ENCODE measurements at regions of chr6 and their contacts with region 1.

Region 1: GRCh38 chr6:43506667-43507471 is 3.3 kb downstream of the LRRC73 start:
- DNase-seq: peak; percentile 71 to 94
- H3K4me3 ChIP-seq: no peak overlapping the region
- CTCF ChIP-seq: peak in 1 of 3 donors; percentile 85
- POLR2A ChIP-seq: no peak

Region 2: DNA sequence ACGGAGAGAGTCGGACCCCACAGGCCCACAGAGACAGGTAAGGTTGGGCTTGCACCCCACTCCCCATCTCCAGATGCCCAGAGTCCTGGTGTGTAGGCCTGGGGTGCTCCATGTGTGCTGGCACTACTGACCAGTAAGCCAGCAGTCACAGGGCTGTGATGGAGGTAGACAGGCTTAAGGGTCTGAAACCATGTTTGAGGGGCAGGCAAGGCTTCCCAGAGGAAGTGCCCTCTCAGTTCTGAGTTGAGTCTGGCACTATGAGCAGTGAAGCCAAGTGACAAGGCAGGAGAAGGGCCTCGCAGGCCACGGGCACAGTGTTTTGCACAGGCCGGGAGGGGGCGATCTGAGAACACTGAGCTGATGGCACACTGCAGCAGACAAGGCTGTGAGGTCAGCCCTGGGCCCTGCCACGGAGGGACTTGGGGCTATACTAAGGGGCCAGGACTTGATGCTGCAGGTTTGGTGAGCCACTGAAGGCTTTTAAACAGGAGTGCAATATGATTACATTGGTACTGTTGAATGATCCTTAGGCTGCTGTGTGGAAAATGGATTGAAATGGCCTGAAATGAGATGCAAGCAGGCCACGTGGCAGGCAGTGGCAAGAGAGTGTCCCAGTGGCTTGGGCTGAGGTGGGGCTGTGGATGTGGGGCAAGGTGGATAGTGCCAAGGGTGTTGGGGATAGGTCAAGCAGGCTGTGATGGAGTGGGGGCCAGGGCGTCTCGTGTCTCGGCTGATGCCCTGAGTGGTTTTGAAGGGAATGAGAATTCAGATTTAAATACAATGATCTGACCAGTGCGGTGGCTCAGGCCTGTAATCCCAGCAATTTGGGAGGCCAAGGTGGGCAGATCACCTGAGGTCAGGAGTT is 243.3 kb before region 1 on chr6:
- intact Hi-C with region 1: loop called (anchors 5 kb)
- DNase-seq: peak; percentile 48 to 92
- H3K4me3 ChIP-seq: no peak overlapping the region
- CTCF ChIP-seq: no peak
- POLR2A ChIP-seq: no peak

Region 3: DNA sequence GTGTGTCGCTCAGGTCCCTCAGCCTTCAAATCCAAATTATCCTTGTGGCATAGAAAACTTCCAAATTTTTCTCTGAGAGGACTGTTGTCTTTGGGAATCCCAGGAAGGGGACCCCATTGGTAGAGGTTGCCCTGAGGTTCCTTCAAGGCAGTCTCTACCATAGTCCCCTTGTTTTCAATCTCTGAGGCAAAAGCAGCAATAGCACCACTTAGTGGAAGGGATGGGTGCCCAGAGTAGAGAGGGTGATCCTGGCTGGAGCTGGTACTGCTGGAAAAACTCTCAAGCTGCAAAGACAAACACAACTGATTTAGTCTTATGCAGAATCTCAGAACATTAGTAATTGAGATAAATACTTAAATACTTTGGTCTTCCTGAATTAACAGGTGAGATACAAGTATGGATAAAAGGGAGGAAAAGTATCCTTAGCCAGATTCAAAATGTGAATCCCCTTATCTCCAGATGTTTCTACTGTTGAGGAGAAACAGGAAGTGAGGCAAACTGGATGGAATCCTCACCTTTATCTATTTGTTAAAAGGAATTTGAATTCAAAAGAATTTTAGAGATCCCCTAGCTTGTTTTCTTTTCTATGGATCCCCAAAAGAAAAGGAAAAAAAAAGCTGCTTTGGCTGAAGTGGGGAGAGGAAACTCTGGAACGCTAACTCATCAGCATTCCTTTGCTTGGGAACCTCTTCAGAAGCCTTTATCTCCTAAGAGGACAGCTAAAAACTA is 150.8 kb before region 1 on chr6:
- intact Hi-C with region 1: loop called (anchors 10 kb)
- DNase-seq: no peak
- H3K4me3 ChIP-seq: no peak overlapping the region
- CTCF ChIP-seq: no peak
- POLR2A ChIP-seq: no peak

Region 4: GRCh38 chr6:43454696-43455530 is 52.0 kb before region 1 on chr6:
- intact Hi-C with region 1: loop called (anchors 5 kb)
- DNase-seq: no peak
- H3K4me3 ChIP-seq: peak overlapping the region; percentile 41
- CTCF ChIP-seq: no peak
- POLR2A ChIP-seq: no peak

Region 5: DNA sequence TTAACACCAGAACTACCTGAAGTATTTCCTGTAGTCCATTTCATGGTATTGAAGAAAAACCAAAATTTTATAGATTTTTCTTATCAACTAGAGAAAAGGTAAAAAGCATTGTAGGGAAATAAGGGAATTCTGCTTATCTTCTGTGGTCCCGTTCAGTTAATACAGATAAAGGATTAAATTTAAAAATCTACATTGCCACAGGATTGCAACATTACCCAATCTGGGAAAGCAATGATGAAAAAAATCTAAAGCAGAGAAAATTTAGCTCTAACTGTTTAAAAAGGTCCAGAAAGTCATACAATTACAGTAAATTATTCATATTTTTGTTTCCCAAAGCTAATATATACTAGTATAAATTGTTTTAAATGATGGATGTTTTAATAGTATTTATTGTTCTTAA is 87.1 kb after region 1 on chr6:
- intact Hi-C with region 1: no loop called
- DNase-seq: no peak
- H3K4me3 ChIP-seq: no peak overlapping the region
- CTCF ChIP-seq: no peak
- POLR2A ChIP-seq: no peak

Region 6: GRCh38 chr6:43621429-43622180 is 114.7 kb after region 1 on chr6:
- intact Hi-C with region 1: no loop called
- DNase-seq: peak in 1 of 2 donors; percentile 78
- H3K4me3 ChIP-seq: no peak overlapping the region
- CTCF ChIP-seq: no peak
- POLR2A ChIP-seq: no peak

Region 7: DNA sequence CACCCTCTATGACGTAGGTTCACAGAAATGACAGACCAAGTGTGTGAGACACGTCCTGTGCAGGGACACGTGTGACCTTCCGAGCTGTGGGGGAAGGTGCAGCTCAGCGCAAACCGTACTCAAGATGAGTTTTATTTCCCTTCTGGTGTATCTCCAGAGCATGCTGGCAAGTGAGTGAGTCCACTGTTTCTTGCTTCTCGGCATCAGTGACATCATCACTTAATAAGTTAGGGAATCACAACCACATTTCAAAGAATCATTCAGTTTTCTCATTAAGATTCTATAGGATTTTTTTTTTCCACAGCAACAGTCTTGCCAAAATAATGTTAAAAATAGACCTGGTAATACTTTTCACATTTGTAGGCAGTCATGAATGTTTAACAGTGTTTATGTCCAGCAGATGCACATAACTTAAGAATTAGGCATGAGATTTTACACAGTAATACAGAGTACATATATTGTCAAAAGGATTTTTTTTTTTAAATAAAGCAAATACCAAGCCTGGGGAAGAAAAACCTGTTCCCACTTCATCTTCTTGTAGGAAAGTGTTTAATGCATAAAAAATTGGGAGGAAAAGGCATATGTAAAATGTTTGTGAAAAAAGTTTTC is 1298.5 kb after region 1 on chr6:
- intact Hi-C with region 1: no loop called
- DNase-seq: no peak
- H3K4me3 ChIP-seq: no peak overlapping the region
- CTCF ChIP-seq: no peak
- POLR2A ChIP-seq: no peak

Region 8: GRCh38 chr6:45072016-45072415 is 1565.1 kb after region 1 on chr6:
- intact Hi-C with region 1: no loop called
- DNase-seq: no peak
- H3K4me3 ChIP-seq: no peak overlapping the region
- CTCF ChIP-seq: no peak
- POLR2A ChIP-seq: no peak

Measured in lower leg skin (tissue), 4 donors.